GM13977 (cell line): ENCODE measurements at regions of chr11 and their contacts with region 1.

Region 1: GRCh38 chr11:130861902-130862860 is 54.1 kb downstream of the SNX19 start:
- DNase-seq: peak; percentile 76
- CTCF ChIP-seq: peak; percentile 100

Region 2: DNA sequence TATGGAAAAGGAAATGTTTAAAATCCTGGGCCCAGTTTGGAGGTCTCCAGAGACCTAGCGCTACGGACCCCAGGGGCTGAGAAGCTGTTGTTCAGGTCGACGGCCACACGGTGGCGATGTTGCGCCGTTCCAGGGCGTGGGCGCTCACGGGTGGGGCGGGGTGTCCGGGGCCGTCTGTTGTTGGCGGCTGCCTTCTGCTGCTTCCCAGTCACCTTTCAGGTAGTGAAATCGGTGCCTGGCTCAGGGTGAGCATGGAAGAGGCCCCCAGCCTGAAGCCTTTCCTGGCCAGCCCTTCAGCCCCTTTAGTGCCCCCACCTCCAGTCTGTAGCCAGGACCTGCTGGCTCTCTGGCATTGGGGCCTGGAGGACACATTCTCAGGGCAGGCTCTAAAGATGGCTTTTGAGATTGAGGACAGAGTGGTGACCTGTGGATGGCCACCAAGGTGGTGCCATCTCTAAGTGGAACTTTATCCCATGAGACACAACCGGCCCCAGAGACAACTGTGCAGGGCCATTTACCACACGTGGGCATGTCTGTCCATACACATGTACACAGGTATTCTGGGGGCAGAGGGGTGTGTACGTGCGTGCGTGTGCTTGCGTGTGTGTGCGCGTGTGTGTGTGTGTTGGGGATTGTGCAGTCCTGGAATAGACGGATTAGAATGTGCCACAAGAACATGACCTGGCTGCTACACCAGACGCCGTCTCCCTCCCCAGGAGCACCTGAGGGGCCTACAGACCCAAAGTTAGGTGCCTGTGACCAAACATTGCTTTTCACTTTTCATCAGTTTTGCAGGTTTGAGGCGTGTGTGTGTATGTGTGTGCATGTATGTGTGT is 648.8 kb before region 1 on chr11:
- in situ Hi-C with region 1: loop called (anchors 25 kb)
- DNase-seq: peak; percentile 86
- CTCF ChIP-seq: peak; percentile 94

Region 3: GRCh38 chr11:130434521-130435223 is 427.5 kb before region 1 on chr11:
- in situ Hi-C with region 1: loop called (anchors 10 kb)
- DNase-seq: peak; percentile 75
- CTCF ChIP-seq: peak; percentile 82

Region 4: GRCh38 chr11:130964058-130964792 is 102.0 kb after region 1 on chr11:
- in situ Hi-C with region 1: no loop called
- DNase-seq: no peak
- CTCF ChIP-seq: no peak